ENCODE measurements at regions of chr10 and their contacts with region 1.

Region 1: DNA sequence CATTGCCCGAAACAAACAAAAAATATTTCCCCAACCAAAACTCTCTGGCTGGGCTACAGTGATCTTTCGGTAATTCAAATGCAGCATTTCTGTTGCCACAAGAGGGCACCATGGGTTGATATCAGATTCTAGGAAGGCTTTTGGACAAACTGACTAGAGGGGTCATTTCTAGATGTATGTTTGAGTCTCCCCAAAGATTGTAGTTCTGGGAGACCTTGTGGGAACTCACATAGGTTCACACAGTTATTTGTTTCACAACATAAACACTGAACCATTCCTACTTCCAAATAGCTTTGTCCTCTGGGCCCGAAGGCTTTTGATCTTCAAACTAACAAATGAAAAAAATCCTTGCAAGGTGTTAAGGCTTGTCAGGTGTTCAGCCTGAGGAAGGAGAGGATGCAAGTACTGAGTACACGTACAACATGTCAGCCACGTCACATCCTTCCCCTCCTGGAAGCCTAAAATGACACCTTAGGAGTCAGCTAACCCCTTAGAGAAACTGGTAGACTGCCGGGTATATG is 37.0 kb upstream of the IL15RA start:
- DNase-seq: peak in 1 of 2 experiments; percentile 74
- H3K4me3 ChIP-seq: no peak overlapping the region
- H3K27ac ChIP-seq: no peak overlapping the region
- H3K4me1 ChIP-seq: no peaks in the 10 kb centered on the region
- H3K27me3 ChIP-seq: no peaks in the 10 kb centered on the region
- CTCF ChIP-seq: peak in 2 of 3 experiments; percentile 73 to 78; a peak in 3 of 4 replicates
- EP300 ChIP-seq: no peak
- POLR2A ChIP-seq: no peak
- RAD21 ChIP-seq: peak; percentile 69 to 74

Region 2: DNA sequence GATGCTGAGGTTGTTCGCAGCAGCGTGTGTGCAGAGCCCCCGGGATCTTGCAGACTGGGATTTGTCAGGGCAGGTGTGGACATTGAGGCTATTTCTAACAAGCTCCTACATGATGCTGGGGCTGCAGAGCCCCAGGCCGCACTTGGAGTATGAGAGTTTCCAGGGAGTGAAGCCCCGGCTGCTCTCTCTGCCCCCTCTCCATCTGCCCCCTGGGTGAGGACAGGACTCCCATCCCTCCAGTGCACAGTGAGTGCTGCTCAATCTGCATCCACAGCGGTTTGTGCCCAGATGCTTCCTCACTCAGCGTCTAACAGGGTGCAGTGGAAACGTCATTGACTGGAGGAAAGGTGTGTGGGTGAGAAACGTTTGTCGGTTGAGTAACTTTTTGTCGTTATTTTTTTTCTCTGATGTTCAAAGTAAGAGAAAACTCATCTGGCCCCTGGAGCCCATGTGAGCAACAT is 22.6 kb after region 1 on chr10:
- CTCF ChIA-PET with region 1: interaction called, 15 read pairs
- POLR2A ChIA-PET with region 1: no interaction called
- DNase-seq: peak in 1 of 2 experiments; percentile 35
- H3K4me3 ChIP-seq: no peak overlapping the region
- H3K27ac ChIP-seq: no peak overlapping the region
- H3K4me1 ChIP-seq: no peaks in the 10 kb centered on the region
- H3K27me3 ChIP-seq: peaks cover 0 to 1% (median 0%) of the 10 kb centered on the region in 4 experiments; a peak in 1 of 7 replicates
- CTCF ChIP-seq: no peak
- EP300 ChIP-seq: no peak
- POLR2A ChIP-seq: no peak
- RAD21 ChIP-seq: no peak

Region 3: GRCh38 chr10:6056411-6057135 is 42.3 kb after region 1 on chr10:
- CTCF ChIA-PET with region 1: no interaction called
- POLR2A ChIA-PET with region 1: no interaction called
- DNase-seq: peak in 1 of 2 experiments; percentile 37
- H3K4me3 ChIP-seq: no peak overlapping the region
- H3K27ac ChIP-seq: no peak overlapping the region
- H3K4me1 ChIP-seq: peaks cover 0 to 2% (median 0%) of the 10 kb centered on the region in 4 experiments; a peak in 1 of 7 replicates
- H3K27me3 ChIP-seq: no peaks in the 10 kb centered on the region
- CTCF ChIP-seq: no peak
- EP300 ChIP-seq: no peak
- POLR2A ChIP-seq: no peak
- RAD21 ChIP-seq: no peak

Region 4: GRCh38 chr10:6068422-6068821 is 54.1 kb after region 1 on chr10:
- CTCF ChIA-PET with region 1: interaction called, 11 read pairs
- POLR2A ChIA-PET with region 1: no interaction called
- DNase-seq: no peak
- H3K4me3 ChIP-seq: no peak overlapping the region
- H3K27ac ChIP-seq: no peak overlapping the region
- H3K4me1 ChIP-seq: no peaks in the 10 kb centered on the region
- H3K27me3 ChIP-seq: no peaks in the 10 kb centered on the region
- CTCF ChIP-seq: no peak
- EP300 ChIP-seq: no peak
- POLR2A ChIP-seq: no peak
- RAD21 ChIP-seq: no peak